Motor neuron (in vitro differentiated cells): ENCODE measurements at regions of chr11 and their contacts with region 1.

Region 1: GRCh38 chr11:111766093-111766833 is at the start of gene PPP2R1B:
- ATAC-seq: peak; percentile 87 to 96 (median 94)
- H3K4me3 ChIP-seq: peak within 1 kb of the TSS; percentile 65 to 100 (median 98)
- H3K27ac ChIP-seq: peak within 1 kb of the TSS; percentile 51 to 74
- H3K4me1 ChIP-seq: peaks cover 23% of the 10 kb centered on the region in 2 donors
- total RNA-seq, gene PPP2R1B: 11.8 to 43.7 (median 19.4) TPM

Region 2: GRCh38 chr11:111454561-111455192 is 311.6 kb before region 1 on chr11:
- in situ Hi-C with region 1: loop called in 1 of 9 experiments (anchors 25 kb)
- ATAC-seq: peak; percentile 35 to 91 (median 72)
- H3K4me3 ChIP-seq: no peak overlapping the region
- H3K27ac ChIP-seq: no peak overlapping the region
- H3K4me1 ChIP-seq: no peaks in the 10 kb centered on the region

Region 3: DNA sequence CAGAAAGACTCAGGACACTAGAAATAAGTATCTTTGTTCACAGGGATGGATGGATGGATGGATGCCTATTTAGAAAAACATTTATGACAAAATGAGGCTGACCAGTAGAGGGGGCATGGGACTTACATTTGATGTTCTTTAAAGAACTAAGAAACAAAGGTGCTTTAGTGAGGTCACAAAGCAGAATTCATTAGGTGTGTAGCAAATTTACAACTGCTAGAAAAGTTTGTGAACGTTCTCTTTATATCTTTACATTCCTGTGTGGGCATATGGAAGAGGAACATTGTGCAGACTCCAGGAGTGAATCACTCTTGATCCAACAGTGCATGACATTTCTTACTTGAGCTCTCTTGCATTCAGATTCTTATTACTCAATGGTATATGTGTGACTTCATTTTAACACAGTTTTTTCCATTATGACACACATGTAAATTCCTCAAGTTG is 179.9 kb before region 1 on chr11:
- in situ Hi-C with region 1: loop called in 2 of 9 experiments (anchors 10 to 25 kb)
- ATAC-seq: peak in 3 of 8 experiments; percentile 48 to 66 (median 50)
- H3K4me3 ChIP-seq: no peak overlapping the region
- H3K27ac ChIP-seq: no peak overlapping the region
- H3K4me1 ChIP-seq: no peaks in the 10 kb centered on the region

Region 4: DNA sequence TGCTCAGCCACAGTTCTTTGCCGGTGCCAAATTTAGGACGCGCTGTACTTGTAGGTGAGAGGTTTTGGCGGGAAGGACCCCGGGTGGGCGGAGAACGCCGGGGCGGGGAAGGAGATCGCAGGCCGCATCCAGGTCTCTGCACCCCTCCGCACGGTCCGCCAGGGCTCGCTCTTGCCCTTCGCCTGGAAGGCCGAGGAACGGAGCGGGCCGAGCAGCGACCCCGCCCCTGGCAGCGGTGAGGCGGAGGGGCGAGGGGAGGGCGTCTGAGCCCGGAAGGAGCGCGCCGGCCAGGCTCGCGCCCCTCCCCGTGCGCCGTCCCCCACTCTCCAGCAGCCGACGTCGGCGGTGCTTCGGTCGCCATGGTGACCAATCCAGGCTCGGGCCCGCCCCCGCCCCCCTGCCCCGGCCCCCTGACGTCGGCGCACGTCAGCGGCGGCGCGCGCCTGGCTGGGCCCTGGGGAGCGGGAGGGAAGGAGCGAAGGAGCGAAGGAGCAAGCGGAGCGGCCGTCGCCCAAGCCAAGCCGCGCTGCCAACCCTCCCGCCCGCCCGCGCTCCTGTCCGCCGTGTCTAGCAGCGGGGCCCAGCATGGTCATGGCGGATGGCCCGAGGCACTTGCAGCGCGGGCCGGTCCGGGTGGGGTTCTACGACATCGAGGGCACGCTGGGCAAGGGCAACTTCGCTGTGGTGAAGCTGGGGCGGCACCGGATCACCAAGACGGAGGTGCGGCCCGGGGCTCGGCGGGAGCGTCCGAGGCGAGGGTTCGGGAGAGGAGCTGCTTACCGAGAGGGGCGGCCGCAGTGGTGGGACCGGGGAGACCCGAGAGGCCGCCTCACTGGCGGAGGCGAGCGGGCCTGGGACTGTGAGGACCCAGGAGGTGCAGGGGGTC is 164.0 kb before region 1 on chr11 and contains the start of gene SIK2:
- in situ Hi-C with region 1: loop called in 6 of 9 experiments (anchors 10 to 25 kb)
- ATAC-seq: peak; percentile 83 to 93 (median 90)
- H3K4me3 ChIP-seq: peak within 1 kb of the TSS; percentile 76 to 91 (median 82)
- H3K27ac ChIP-seq: peak within 1 kb of the TSS; percentile 81 to 85
- H3K4me1 ChIP-seq: peaks cover 3 to 17% of the 10 kb centered on the region in 2 donors
- total RNA-seq, gene SIK2: 8.5 to 22.5 (median 12.1) TPM

Region 5: GRCh38 chr11:111841370-111842053 is 75.2 kb after region 1 on chr11:
- in situ Hi-C with region 1: loop called in 1 of 9 experiments (anchors 10 kb)
- ATAC-seq: peak; percentile 89 to 98 (median 94)
- H3K4me3 ChIP-seq: no peak overlapping the region
- H3K27ac ChIP-seq: no peak overlapping the region
- H3K4me1 ChIP-seq: no peaks in the 10 kb centered on the region